PC-9 (cell line): ENCODE measurements at regions of chr17 and their contacts with region 1.

Region 1: GRCh38 chr17:74379495-74380085 is 12.3 kb downstream of the GPR142 start:
- DNase-seq: peak; percentile 56 to 90
- H3K4me3 ChIP-seq: no peak overlapping the region
- H3K27ac ChIP-seq: no peak overlapping the region
- H3K4me1 ChIP-seq: peaks cover 17% of the 10 kb centered on the region
- H3K27me3 ChIP-seq: peaks cover 47% of the 10 kb centered on the region
- CTCF ChIP-seq: peak; percentile 95

Region 2: GRCh38 chr17:74430706-74431567 is 51.3 kb after region 1 on chr17:
- CTCF ChIA-PET with region 1: interaction called, 3 read pairs
- POLR2A ChIA-PET with region 1: interaction called, 3 read pairs
- intact Hi-C with region 1: loop called (anchors 1 kb)
- DNase-seq: peak; percentile 69 to 83
- H3K4me3 ChIP-seq: peak overlapping the region; percentile 81
- H3K27ac ChIP-seq: peak overlapping the region; percentile 94
- H3K4me1 ChIP-seq: peaks cover 19% of the 10 kb centered on the region
- H3K27me3 ChIP-seq: no peaks in the 10 kb centered on the region
- CTCF ChIP-seq: no peak

Region 3: DNA sequence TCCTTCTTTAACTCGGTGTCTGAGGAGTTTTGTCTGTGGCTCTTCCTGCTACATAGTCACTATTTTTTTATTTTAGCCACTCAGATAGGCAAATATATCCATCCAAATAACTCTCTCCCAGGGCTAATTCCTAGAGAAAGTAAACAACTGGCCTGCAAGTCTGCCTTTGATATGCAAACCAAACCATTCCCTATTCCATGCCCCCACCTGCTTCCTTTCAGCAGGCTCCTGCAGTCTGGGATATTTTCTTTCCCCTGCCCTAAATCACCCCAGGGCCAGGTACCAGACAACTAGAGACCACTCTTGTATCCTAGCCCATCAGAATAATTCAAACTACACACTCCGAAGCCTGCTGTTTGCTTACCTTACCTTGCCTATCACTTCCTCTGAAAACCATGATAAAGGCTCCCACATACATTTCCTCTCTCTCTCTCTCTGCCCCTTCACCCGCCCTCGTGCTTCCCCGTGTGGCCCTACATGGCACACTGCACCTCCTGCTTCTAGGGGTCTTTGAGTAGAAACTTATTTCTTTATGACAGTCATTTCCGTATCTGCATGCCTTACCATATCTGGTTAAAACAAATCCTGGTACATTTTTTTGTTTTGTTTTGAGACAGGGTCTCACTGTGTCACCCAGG is 179.4 kb after region 1 on chr17:
- CTCF ChIA-PET with region 1: no interaction called
- POLR2A ChIA-PET with region 1: no interaction called
- intact Hi-C with region 1: no loop called
- DNase-seq: no peak
- H3K4me3 ChIP-seq: no peak overlapping the region
- H3K27ac ChIP-seq: no peak overlapping the region
- H3K4me1 ChIP-seq: no peaks in the 10 kb centered on the region
- H3K27me3 ChIP-seq: peaks cover 99% of the 10 kb centered on the region
- CTCF ChIP-seq: no peak

Region 4: GRCh38 chr17:74601944-74602572 is 222.5 kb after region 1 on chr17:
- CTCF ChIA-PET with region 1: interaction called, 3 read pairs
- POLR2A ChIA-PET with region 1: no interaction called
- intact Hi-C with region 1: loop called (anchors 5 kb)
- DNase-seq: peak in 1 of 2 experiments; percentile 24
- H3K4me3 ChIP-seq: no peak overlapping the region
- H3K27ac ChIP-seq: no peak overlapping the region
- H3K4me1 ChIP-seq: no peaks in the 10 kb centered on the region
- H3K27me3 ChIP-seq: peaks cover 93% of the 10 kb centered on the region
- CTCF ChIP-seq: peak; percentile 69